ENCODE measurements at regions of chr3 and their contacts with region 1.

Region 1: DNA sequence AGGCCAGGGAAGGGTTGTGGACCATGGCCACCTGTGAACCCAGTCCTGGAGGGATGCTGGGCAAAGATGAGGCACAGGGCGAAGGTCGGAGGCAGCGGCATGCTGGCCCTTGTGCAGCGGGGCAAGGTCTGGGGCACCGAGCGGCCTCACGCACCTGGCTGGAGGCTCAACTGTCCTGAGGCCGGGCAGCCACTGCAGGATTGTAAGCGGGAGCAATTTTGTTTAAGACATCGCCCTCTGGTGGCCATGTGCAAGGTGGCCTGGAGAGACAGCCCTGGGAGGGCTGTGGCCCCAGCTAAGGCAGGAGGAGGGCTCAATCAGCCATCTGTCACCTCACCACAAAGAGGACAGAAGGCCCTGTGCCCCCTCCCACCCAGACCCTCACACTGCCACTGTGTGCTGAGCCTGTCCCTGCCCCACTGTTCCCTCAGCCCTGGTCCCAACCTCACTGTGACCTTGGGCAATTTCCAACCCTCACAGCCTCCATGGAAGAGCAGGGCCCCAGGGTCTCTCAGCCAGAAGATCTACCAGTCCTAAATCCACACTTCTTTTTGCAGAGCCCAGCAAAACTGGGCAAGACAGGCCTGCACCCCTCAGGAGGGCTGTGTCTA is 46.2 kb downstream of the TPRA1 start:
- DNase-seq: peak; percentile 76
- H3K4me3 ChIP-seq: no peak overlapping the region
- H3K27ac ChIP-seq: no peak overlapping the region
- H3K4me1 ChIP-seq: peaks cover 0 to 17% (median 10%) of the 10 kb centered on the region in 4 donors
- H3K27me3 ChIP-seq: no peaks in the 10 kb centered on the region
- CTCF ChIP-seq: peak; percentile 17 to 81 (median 52)
- EP300 ChIP-seq: no peak
- POLR2A ChIP-seq: no peak

Region 2: DNA sequence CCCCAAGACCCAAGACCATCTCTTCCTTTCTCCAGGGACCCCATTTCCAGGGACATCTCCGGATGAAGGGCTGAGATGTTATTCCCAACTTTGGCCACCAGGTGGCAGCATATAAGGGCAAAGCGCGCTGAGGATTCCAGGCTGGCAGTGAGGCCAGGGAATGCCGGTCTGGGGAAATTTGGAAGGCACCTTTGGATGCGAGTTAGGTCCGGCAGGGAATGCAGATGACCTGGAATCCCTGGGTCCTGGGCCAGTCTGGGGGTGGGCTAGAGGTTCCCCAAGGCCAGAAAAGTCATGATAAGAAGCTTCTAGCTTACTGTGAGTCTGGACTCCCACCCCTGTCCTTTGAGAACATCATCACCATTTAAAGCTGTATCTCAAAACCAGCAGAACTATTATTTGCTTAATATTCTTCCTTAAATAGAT is 1021.9 kb before region 1 on chr3:
- intact Hi-C with region 1: loop called (anchors 10 kb)
- DNase-seq: peak; percentile 71
- H3K4me3 ChIP-seq: no peak overlapping the region
- H3K27ac ChIP-seq: no peak overlapping the region
- H3K4me1 ChIP-seq: peaks cover 0 to 15% (median 13%) of the 10 kb centered on the region in 4 donors
- H3K27me3 ChIP-seq: peaks cover 8 to 41% (median 15%) of the 10 kb centered on the region in 3 donors
- CTCF ChIP-seq: peak; percentile 32 to 92 (median 82)
- EP300 ChIP-seq: no peak
- POLR2A ChIP-seq: no peak

Region 3: GRCh38 chr3:126679318-126679751 is 865.0 kb before region 1 on chr3:
- intact Hi-C with region 1: loop called (anchors 5 kb)
- DNase-seq: peak; percentile 87
- H3K4me3 ChIP-seq: no peak overlapping the region
- H3K27ac ChIP-seq: no peak overlapping the region
- H3K4me1 ChIP-seq: peaks cover 0 to 7% (median 3%) of the 10 kb centered on the region in 4 donors
- H3K27me3 ChIP-seq: peaks cover 0 to 12% (median 0%) of the 10 kb centered on the region in 3 donors
- CTCF ChIP-seq: peak; percentile 78 to 97 (median 85)
- EP300 ChIP-seq: no peak
- POLR2A ChIP-seq: no peak